IMR-90 (cell line): ENCODE measurements at regions of chr10 and their contacts with region 1.

Region 1: GRCh38 chr10:8269976-8270375 is 215.5 kb downstream of the GATA3 start:
- DNase-seq: no peak
- ATAC-seq: no peak
- H3K4me3 ChIP-seq: no peak overlapping the region
- H3K27ac ChIP-seq: no peak overlapping the region
- H3K4me1 ChIP-seq: no peaks in the 10 kb centered on the region
- H3K27me3 ChIP-seq: no peaks in the 10 kb centered on the region
- CTCF ChIP-seq: no peak
- POLR2A ChIP-seq: no peak
- RAD21 ChIP-seq: no peak

Region 2: DNA sequence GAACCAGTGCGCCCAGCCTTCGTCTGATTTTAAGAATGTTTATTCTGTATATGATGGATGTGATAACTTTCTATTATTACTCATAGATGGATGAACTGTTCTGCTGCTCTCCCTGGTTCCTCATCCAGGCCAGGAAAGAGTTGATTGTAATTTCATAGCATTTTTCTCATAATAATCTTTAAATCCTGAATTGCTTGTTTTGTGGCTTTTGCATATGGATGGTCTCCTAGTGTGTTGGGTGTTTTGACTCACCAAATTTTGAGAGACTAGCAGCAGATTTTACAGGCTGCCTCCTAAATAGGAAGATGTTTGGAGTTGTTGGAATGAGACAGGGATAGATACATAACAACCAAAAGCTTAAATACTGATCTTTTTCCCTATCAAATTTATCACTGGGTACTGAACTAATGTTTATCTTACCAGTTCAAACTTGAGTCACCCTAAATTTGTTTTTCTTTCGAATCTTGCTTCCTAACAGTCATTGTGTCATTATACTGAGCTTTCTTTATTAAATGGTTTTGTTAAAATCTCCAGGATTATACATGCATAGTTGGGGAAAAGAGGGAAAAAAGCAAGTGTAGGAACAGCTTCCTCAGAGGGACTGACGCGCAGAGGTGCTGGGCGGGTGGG is 321.5 kb before region 1 on chr10:
- CTCF ChIA-PET with region 1: no interaction called
- POLR2A ChIA-PET with region 1: no interaction called
- dilution Hi-C with region 1: no loop called
- in situ Hi-C with region 1: no loop called
- intact Hi-C with region 1: loop called (anchors 2 kb)
- DNase-seq: peak; percentile 79
- ATAC-seq: peak; percentile 65
- H3K4me3 ChIP-seq: no peak overlapping the region
- H3K27ac ChIP-seq: peak overlapping the region; percentile 80
- H3K4me1 ChIP-seq: peaks cover 20% of the 10 kb centered on the region
- H3K27me3 ChIP-seq: no peaks in the 10 kb centered on the region
- CTCF ChIP-seq: no peak
- POLR2A ChIP-seq: no peak
- RAD21 ChIP-seq: no peak

Region 3: DNA sequence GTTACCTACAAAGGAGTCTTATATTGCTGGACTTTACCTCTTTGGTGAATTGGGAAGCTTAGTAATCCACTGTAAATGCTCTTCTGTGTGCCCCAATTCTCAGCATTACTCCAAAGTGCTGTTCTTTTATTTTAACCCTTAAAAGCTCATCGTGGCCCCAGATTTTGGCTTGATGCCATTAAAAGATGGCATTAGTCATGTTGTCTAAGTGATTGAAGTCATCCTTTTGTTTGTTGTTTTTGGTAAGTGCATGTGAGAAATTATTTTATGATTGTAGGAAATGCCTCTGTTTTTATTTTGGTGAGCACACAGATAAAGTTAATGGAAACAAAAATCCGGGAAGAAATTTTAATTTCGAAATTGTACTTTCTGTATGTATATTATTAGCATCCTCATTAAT is 298.0 kb before region 1 on chr10:
- CTCF ChIA-PET with region 1: no interaction called
- POLR2A ChIA-PET with region 1: no interaction called
- dilution Hi-C with region 1: no loop called
- in situ Hi-C with region 1: no loop called
- intact Hi-C with region 1: no loop called
- DNase-seq: no peak
- ATAC-seq: no peak
- H3K4me3 ChIP-seq: no peak overlapping the region
- H3K27ac ChIP-seq: no peak overlapping the region
- H3K4me1 ChIP-seq: no peaks in the 10 kb centered on the region
- H3K27me3 ChIP-seq: no peaks in the 10 kb centered on the region
- CTCF ChIP-seq: no peak
- POLR2A ChIP-seq: no peak
- RAD21 ChIP-seq: no peak